T-cell (primary cell): ENCODE measurements at regions of chr6 and their contacts with region 1.

Region 1: GRCh38 chr6:157789861-157790260 is 33.2 kb upstream of the SNX9 start:
- DNase-seq: no peak
- ATAC-seq: no peak
- H3K4me3 ChIP-seq: no peak overlapping the region
- H3K4me3 Mint-ChIP-seq: no peak overlapping the region
- H3K27ac ChIP-seq: no peak overlapping the region
- H3K27ac Mint-ChIP-seq: no peak overlapping the region
- H3K4me1 ChIP-seq: peaks cover 0 to 2% of the 10 kb centered on the region in 2 experiments
- H3K4me1 Mint-ChIP-seq: peaks cover 5 to 12% (median 9%) of the 10 kb centered on the region in 3 donors
- H3K27me3 ChIP-seq: no peaks in the 10 kb centered on the region
- H3K27me3 Mint-ChIP-seq: no peaks in the 10 kb centered on the region

Region 2: GRCh38 chr6:157592525-157592924 is 197.3 kb before region 1 on chr6:
- CTCF ChIA-PET with region 1: no interaction called
- POLR2A ChIA-PET with region 1: no interaction called
- DNase-seq: peak in 7 of 35 experiments; percentile 8 to 28 (median 15)
- ATAC-seq: peak in 1 of 4 experiments; percentile 55
- H3K4me3 ChIP-seq: no peak overlapping the region
- H3K4me3 Mint-ChIP-seq: peak overlapping the region in 2 of 3 donors; percentile 31 to 41
- H3K27ac ChIP-seq: no peak overlapping the region
- H3K27ac Mint-ChIP-seq: no peak overlapping the region
- H3K4me1 ChIP-seq: peaks cover 0 to 2% of the 10 kb centered on the region in 2 experiments
- H3K4me1 Mint-ChIP-seq: no peaks in the 10 kb centered on the region
- H3K27me3 ChIP-seq: peaks cover 0 to 4% of the 10 kb centered on the region in 2 experiments
- H3K27me3 Mint-ChIP-seq: no peaks in the 10 kb centered on the region

Region 3: DNA sequence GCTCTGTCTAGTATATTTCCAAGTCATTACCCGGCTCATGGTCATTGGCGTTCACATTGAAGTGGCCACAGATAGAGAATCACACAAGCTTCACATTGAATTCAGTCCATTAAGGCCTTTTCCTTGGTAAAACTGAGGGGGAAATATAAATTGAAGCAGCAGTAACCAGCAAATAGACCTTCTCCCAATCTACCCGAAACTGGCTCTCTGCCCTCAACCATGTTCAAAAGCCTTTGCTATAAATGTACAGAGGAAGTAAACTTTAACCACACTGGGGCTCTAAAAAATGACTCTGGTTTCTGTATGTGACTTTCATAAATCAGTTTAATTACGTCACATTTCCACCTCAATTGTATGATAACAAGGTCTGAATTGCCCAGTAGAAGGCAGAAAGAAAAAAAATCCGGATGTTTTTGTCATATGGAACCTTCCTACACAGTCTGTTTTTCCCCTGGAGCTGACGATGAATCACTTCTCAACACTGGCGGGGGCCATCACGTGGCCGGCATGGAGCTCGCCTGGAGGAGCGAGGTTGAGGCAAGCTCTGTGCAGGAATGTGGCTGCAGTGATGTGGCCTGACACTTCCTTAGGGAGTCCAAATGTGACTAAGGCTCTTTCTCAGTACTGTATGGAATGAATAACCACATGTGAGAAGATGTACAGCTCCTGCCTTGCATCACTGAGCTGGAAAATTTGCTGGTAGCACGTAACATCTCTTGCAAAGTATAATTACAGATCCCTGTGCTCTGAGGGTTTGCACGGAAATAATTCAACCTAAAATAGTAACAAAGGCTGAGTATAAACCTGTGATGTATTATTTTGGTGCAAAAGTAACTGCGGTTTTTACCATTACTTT is 25.5 kb before region 1 on chr6:
- CTCF ChIA-PET with region 1: interaction called, 3 to 11 read pairs
- POLR2A ChIA-PET with region 1: no interaction called
- DNase-seq: peak; percentile 57 to 90 (median 77)
- ATAC-seq: peak; percentile 77 to 79 (median 78)
- H3K4me3 ChIP-seq: peak overlapping the region; percentile 25 to 26
- H3K4me3 Mint-ChIP-seq: peak overlapping the region; percentile 49 to 72 (median 64)
- H3K27ac ChIP-seq: peak overlapping the region; percentile 74
- H3K27ac Mint-ChIP-seq: peak overlapping the region; percentile 85 to 93
- H3K4me1 ChIP-seq: peaks cover 50 to 68% of the 10 kb centered on the region in 2 experiments
- H3K4me1 Mint-ChIP-seq: peaks cover 69 to 86% (median 82%) of the 10 kb centered on the region in 3 donors
- H3K27me3 ChIP-seq: no peaks in the 10 kb centered on the region
- H3K27me3 Mint-ChIP-seq: peaks cover 0 to 2% of the 10 kb centered on the region in 2 donors